ENCODE measurements at regions of chr4 and their contacts with region 1.

Region 1: GRCh38 chr4:124322234-124323065 is 390.1 kb downstream of the ANKRD50 start:
- DNase-seq: no peak
- H3K4me3 Mint-ChIP-seq: no peak overlapping the region
- H3K27ac Mint-ChIP-seq: no peak overlapping the region
- H3K4me1 Mint-ChIP-seq: no peaks in the 10 kb centered on the region
- H3K27me3 Mint-ChIP-seq: no peaks in the 10 kb centered on the region

Region 2: DNA sequence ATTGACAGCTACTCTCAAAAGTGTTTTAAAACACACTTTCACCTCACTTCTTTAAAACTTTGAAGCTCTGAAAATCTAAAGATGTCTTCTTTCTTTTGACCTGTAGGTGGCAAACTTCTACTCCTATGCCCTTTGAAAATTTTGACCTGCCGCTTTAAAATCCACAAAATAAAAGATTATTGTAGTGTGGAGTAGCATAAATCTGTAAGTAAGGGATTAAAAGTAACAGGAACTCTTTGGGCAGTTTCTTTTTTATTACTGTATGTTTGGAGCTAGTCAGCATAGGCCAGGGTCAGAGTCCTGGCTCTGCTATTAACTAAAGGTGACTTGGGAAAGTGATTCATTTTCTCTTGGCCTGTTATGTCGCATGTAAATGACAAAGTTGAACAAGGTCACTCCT is 1564.4 kb before region 1 on chr4:
- intact Hi-C with region 1: loop called (anchors 10 kb)
- DNase-seq: no peak
- H3K4me3 Mint-ChIP-seq: no peak overlapping the region
- H3K27ac Mint-ChIP-seq: no peak overlapping the region
- H3K4me1 Mint-ChIP-seq: peaks cover 40% of the 10 kb centered on the region
- H3K27me3 Mint-ChIP-seq: peaks cover 19% of the 10 kb centered on the region

Region 3: DNA sequence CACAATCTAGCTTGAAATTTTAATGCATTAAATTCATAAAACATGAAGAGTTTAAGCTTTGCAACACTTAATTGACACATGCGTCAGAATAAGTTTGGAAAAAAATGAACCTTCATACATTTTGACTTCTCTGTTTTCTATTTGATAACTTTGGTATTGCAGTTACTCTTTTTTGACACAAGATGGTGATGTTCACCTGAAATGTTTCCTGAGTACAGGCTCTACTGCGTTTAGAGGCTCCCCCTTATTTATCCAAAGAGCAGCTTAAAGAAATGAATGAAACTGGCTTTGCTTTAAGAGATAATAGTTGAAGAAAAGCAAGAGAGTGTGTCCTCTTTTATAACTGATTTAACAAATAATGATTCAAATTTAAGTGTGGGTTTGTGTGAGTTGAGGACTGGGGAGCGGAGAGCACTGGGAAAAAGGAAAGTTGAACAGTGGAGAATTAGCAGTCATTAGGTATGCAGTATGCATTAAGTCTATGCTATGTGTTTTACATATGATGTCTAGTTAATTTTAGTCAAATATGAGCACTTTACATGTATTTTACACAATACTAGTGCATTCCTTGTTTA is 1219.5 kb before region 1 on chr4:
- intact Hi-C with region 1: loop called (anchors 1 kb)
- DNase-seq: no peak
- H3K4me3 Mint-ChIP-seq: no peak overlapping the region
- H3K27ac Mint-ChIP-seq: no peak overlapping the region
- H3K4me1 Mint-ChIP-seq: peaks cover 7% of the 10 kb centered on the region
- H3K27me3 Mint-ChIP-seq: no peaks in the 10 kb centered on the region

Region 4: DNA sequence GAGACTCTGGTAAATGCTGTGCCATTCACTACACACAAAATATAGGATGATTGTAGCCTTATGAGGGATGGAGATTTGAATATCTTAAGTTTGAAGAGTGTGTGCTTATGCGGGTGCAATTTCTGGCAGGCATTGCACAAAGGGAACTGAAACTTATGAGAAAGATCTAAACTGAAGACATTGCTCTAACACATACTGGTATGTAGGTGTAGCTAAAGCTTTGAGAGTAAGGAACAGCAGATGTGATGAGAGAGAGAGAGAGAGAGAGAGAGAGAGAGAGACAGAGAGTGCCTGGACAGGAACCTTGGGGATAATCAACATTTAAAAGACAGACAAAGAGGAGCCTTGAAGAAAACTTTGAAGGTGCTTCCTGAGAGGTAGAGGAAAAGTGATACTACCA is 546.2 kb before region 1 on chr4:
- intact Hi-C with region 1: loop called (anchors 1 kb)
- DNase-seq: no peak
- H3K4me3 Mint-ChIP-seq: no peak overlapping the region
- H3K27ac Mint-ChIP-seq: no peak overlapping the region
- H3K4me1 Mint-ChIP-seq: no peaks in the 10 kb centered on the region
- H3K27me3 Mint-ChIP-seq: peaks cover 2% of the 10 kb centered on the region

Region 5: GRCh38 chr4:124469981-124470380 is 147.5 kb after region 1 on chr4:
- intact Hi-C with region 1: no loop called
- DNase-seq: no peak
- H3K4me3 Mint-ChIP-seq: no peak overlapping the region
- H3K27ac Mint-ChIP-seq: no peak overlapping the region
- H3K4me1 Mint-ChIP-seq: no peaks in the 10 kb centered on the region
- H3K27me3 Mint-ChIP-seq: no peaks in the 10 kb centered on the region